Activated T-helper 1 cell treated with anti-CD3 and anti-CD28 coated beads, Interleukin-12 subunit alpha, Interleukin-12 subunit beta, Interleukin-2, Interleukin-4 antibody, amounts not matched to agents 30 ng/mL and 10 ng/mL and 1 ng/mL, durations not matched to agents 14 hours and 24 hours and 36 hours (primary cell): ENCODE measurements at regions of chr6 and their contacts with region 1.

Region 1: DNA sequence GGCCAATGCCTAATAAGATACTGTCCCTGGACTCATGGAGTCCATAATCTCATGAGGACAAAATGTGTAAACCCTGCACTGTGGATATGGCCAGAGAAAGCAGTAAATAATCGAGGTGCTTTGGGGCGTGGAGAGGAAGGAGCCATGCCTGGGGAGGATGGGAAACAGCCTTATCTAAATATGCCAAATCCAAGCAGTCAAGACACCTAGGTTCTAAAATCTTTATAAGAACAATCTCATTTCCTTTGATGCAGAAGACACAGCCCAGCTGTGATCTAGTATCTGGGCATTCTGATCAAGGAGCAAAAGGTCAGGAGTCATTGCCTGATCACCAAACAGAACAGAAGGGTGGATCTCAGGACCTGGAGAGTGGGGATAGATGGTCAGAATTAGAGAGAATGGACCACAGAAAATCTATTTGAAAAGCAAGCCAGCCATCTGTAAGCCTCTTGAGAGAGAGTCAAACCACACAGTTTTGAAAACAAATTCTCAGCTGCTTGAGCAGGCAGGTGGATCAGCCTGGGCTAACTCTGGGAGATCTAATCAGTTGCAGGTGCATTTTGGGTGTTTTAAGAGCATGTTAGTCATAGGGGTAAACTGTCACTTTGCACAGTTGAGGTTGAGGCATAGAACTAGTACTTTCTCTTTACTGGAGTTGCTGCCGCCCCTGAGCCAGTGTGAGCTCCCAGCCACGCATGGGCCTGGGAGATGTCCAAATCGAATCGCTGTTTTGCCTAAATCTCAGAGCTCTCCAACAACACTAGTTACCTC is 130.8 kb upstream of the TNFAIP3 start:
- DNase-seq: peak; percentile 29
- H3K4me3 Mint-ChIP-seq: peak overlapping the region; percentile 0
- H3K27ac Mint-ChIP-seq: peak overlapping the region; percentile 20
- H3K4me1 Mint-ChIP-seq: peaks cover 32% of the 10 kb centered on the region
- H3K27me3 Mint-ChIP-seq: peaks cover 9% of the 10 kb centered on the region

Region 2: DNA sequence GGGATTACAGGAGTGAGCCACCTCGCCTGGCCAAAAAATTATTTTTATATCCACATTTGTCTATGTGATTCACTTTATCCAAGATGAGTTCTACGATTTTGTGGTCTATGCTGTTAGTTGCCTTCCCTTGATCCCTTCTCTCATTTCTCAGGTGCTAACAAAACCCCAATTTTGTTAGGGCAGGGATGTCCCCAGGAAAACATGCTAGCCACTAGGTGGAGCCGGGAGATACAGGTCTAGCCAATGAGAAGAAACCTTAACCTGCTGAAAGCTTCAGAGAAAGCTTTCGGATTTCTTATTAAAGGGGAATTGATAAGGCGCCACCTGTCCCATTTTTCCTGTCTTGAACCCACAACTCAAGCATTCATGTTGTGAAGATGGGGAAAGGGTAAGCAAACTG is 74.6 kb before region 1 on chr6:
- intact Hi-C with region 1: no loop called
- DNase-seq: no peak
- H3K4me3 Mint-ChIP-seq: no peak overlapping the region
- H3K27ac Mint-ChIP-seq: no peak overlapping the region
- H3K4me1 Mint-ChIP-seq: peaks cover 58% of the 10 kb centered on the region
- H3K27me3 Mint-ChIP-seq: peaks cover 2% of the 10 kb centered on the region

Region 3: DNA sequence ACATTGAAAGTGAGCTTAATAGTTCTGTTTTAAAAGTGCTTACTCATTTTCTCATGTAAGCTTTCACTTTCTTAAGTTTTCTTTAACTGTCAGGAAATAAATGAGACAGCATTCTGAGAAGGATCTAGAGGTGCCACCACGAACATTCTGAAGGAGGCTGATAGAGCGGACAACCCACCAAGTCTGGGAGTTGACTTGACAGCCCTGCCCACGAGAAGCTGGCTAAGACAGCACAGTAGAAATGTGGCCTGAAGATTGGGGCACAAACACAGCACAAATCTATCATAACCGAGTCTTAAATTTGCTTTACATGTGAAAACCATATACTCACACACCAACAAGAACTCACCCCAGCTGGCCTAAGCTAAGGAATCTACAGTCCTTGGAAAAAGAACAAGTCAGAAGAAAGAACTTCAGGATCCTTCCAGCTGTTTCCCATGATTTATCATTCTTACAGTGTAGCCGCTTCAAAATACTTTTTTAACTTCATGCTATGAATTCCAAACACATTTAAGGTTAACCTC is 13.4 kb before region 1 on chr6:
- intact Hi-C with region 1: loop called (anchors 2 kb)
- DNase-seq: no peak
- H3K4me3 Mint-ChIP-seq: peak overlapping the region; percentile 47
- H3K27ac Mint-ChIP-seq: peak overlapping the region; percentile 52
- H3K4me1 Mint-ChIP-seq: peaks cover 34% of the 10 kb centered on the region
- H3K27me3 Mint-ChIP-seq: peaks cover 2% of the 10 kb centered on the region